HepG2 (cell line): ENCODE measurements at regions of chr7 and their contacts with region 1.

Region 1: GRCh38 chr7:43582503-43583423 is at the start of gene STK17A:
- DNase-seq: peak; percentile 88
- ATAC-seq: peak; percentile 84
- H3K4me3 ChIP-seq: peak within 1 kb of the TSS; percentile 89 to 96 (median 93)
- H3K27ac ChIP-seq: peak within 1 kb of the TSS; percentile 75
- H3K4me1 ChIP-seq: peaks cover 49% of the 10 kb centered on the region
- H3K27me3 ChIP-seq: peaks cover 0 to 5% of the 10 kb centered on the region in 2 experiments; a peak in 1 of 5 replicates
- CTCF ChIP-seq: peak; percentile 99
- EP300 ChIP-seq: 0 out of 4 replicates have a peak, but pooled peaks of 1 of the 2 experiments have one; percentile 13
- POLR2A ChIP-seq: peak; percentile 95 to 97
- RAD21 ChIP-seq: peak; percentile 95
- total RNA-seq, gene STK17A: 24.3 and 30.2 TPM in 2 replicates

Region 2: DNA sequence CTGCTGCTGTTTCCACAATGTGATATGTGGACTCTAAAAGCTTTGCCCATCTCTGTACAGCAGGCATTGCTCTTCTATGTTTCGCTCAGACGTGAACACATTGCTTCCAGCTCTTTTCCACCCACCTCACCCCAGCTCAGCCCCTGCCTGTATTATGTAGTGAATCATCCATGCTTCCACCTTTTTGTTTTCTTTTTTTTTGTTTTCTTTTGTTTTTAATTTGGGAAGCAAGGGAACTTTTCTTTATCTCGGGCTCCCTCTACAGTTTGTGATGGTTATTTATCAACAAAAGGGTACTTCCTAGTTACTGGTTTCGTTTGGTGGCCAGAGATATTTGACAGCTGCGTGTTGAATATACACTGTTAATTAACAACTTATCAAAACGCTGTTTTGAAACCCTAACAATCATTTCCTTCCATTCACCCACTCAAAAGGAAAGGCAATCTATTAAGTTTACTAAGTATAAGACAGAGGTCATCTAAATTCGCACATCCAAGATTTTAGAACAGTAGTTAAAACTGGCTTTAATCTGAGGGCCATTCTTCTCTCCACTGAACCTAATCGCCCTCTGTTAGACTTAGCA is 127.7 kb before region 1 on chr7:
- CTCF ChIA-PET with region 1: no interaction called
- POLR2A ChIA-PET with region 1: interaction called, 4 read pairs
- in situ Hi-C with region 1: no loop called
- intact Hi-C with region 1: loop called (anchors 5 kb)
- DNase-seq: peak; percentile 29
- ATAC-seq: peak; percentile 56
- H3K4me3 ChIP-seq: no peak overlapping the region
- H3K27ac ChIP-seq: no peak overlapping the region
- H3K4me1 ChIP-seq: peaks cover 27% of the 10 kb centered on the region
- H3K27me3 ChIP-seq: 0 out of 5 replicates have a peak, but pooled peaks cover 0 to 2% of the 10 kb centered on the region in 2 experiments
- CTCF ChIP-seq: peak; percentile 60
- EP300 ChIP-seq: no peak
- POLR2A ChIP-seq: no peak
- RAD21 ChIP-seq: no peak

Region 3: DNA sequence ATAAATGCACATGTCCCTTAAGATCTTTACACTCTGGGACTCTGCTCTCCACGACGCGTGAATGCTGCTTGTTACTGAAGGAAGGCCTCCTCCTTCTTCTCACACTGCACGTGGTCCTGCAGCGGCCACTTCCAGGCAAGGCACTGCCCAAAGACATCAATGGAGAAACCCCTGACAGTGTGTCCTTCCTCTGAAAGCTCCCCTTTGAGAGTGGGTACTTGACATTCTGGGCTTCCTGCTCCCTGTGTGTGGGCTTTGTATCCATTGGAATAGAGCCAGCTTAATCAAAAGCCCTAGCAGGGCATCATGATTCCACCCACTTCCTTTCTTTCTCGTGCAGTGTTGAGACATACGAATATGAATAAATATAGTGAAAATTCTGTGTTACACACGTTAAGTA is 69.5 kb before region 1 on chr7:
- CTCF ChIA-PET with region 1: no interaction called
- POLR2A ChIA-PET with region 1: interaction called, 3 read pairs
- in situ Hi-C with region 1: no loop called
- intact Hi-C with region 1: loop called (anchors 5 kb)
- DNase-seq: no peak
- ATAC-seq: no peak
- H3K4me3 ChIP-seq: no peak overlapping the region
- H3K27ac ChIP-seq: no peak overlapping the region
- H3K4me1 ChIP-seq: peaks cover 37% of the 10 kb centered on the region
- H3K27me3 ChIP-seq: no peaks in the 10 kb centered on the region
- CTCF ChIP-seq: no peak
- EP300 ChIP-seq: no peak
- POLR2A ChIP-seq: no peak
- RAD21 ChIP-seq: no peak

Region 4: DNA sequence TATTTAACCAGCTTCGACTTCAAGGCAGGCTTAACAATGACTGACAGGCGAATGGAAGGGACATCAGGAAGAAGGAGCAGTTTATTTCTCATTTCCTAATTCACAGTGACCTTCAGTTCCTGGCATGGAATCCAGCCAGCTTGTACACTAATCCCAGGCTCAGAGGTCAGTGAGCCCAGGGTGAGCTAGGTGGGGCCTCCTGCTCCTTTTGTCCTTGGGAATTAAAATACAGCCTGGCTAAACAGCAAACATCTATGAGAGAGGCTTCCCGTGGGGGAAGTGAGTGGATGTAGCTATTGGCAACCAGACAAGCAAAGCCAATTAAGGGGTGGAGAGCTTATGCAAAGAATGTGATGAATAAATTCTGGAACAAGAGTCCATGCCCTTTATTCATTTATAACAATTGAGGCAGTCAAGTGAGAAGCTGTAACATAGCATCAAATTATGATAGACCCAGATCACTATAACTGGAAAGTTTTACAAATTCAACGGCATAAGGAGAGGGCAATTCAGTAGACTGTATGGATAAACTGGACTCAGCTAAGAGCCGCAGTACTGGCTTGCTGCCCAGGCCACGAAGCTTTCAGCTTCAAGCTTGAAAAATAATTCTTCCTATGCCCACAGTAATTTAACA is 57.2 kb after region 1 on chr7:
- CTCF ChIA-PET with region 1: no interaction called
- POLR2A ChIA-PET with region 1: interaction called, 17 read pairs
- in situ Hi-C with region 1: no loop called
- intact Hi-C with region 1: loop called (anchors 5 kb)
- DNase-seq: peak; percentile 98
- ATAC-seq: peak; percentile 96
- H3K4me3 ChIP-seq: no peak overlapping the region; a peak in 1 of 6 replicates
- H3K27ac ChIP-seq: peak overlapping the region; percentile 97
- H3K4me1 ChIP-seq: peaks cover 64% of the 10 kb centered on the region
- H3K27me3 ChIP-seq: no peaks in the 10 kb centered on the region
- CTCF ChIP-seq: no peak
- EP300 ChIP-seq: peak; percentile 89 to 91
- POLR2A ChIP-seq: no peak
- RAD21 ChIP-seq: no peak

Region 5: GRCh38 chr7:43700059-43700501 is 117.3 kb after region 1 on chr7:
- CTCF ChIA-PET with region 1: interaction called, 59 read pairs
- POLR2A ChIA-PET with region 1: interaction called, 39 read pairs
- in situ Hi-C with region 1: loop called (anchors 5 kb)
- intact Hi-C with region 1: loop called (anchors 1 kb)
- DNase-seq: peak; percentile 46
- ATAC-seq: 0 out of 3 replicates have a peak, but pooled peaks have one; percentile 38
- H3K4me3 ChIP-seq: no peak overlapping the region
- H3K27ac ChIP-seq: no peak overlapping the region
- H3K4me1 ChIP-seq: peaks cover 17% of the 10 kb centered on the region
- H3K27me3 ChIP-seq: no peaks in the 10 kb centered on the region
- CTCF ChIP-seq: peak; percentile 76
- EP300 ChIP-seq: no peak
- POLR2A ChIP-seq: no peak
- RAD21 ChIP-seq: peak; percentile 78

Region 6: DNA sequence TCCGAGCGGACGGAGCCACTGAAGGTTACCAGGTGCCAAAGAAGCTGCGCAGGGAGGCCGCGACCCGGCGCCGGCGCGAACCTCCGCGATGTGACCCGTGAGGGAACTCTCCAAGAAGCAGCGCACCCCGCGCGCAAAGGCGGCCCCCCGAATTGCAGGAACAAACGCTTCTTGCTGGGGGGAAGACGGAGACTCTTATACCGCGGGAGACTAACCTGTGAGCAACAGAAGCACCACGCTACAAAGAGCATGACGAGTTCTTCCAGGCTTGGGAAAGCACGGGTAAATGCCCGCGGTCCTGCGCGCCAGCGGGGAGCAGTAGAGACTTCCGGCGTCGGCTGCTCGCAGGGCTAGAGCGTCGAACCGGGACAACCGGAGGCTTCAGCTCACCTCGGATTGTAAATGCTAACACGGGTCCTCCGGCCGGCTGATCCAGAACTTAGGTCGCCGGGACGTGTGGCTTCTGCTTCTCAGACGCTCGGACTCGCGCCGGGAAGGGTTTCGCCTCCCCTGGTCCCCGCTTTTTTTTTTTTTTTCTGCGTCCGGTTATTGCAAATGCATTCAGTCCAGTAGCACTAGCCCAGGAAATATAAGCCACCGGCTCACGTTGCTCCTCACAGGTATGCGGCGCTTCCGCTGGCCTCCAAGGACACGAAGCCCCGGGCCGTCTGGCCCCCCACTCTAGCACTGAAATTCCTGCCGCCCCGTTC is 146.6 kb after region 1 on chr7 and contains the start of gene COA1:
- CTCF ChIA-PET with region 1: no interaction called
- POLR2A ChIA-PET with region 1: interaction called, 22 read pairs
- in situ Hi-C with region 1: no loop called
- intact Hi-C with region 1: no loop called
- DNase-seq: peak; percentile 82
- ATAC-seq: peak; percentile 99
- H3K4me3 ChIP-seq: peak within 1 kb of the TSS; percentile 89 to 98 (median 95)
- H3K27ac ChIP-seq: peak within 1 kb of the TSS; percentile 89
- H3K4me1 ChIP-seq: peaks cover 28% of the 10 kb centered on the region
- H3K27me3 ChIP-seq: no peaks in the 10 kb centered on the region; a peak in 1 of 5 replicates
- CTCF ChIP-seq: no peak
- EP300 ChIP-seq: 0 out of 4 replicates have a peak, but pooled peaks of 1 of the 2 experiments have one; percentile 30
- POLR2A ChIP-seq: peak; percentile 84 to 86
- RAD21 ChIP-seq: peak; percentile 49; the same call in 1 of the 2 replicates
- total RNA-seq, gene COA1: 65.7 and 73.8 TPM in 2 replicates

Region 7: DNA sequence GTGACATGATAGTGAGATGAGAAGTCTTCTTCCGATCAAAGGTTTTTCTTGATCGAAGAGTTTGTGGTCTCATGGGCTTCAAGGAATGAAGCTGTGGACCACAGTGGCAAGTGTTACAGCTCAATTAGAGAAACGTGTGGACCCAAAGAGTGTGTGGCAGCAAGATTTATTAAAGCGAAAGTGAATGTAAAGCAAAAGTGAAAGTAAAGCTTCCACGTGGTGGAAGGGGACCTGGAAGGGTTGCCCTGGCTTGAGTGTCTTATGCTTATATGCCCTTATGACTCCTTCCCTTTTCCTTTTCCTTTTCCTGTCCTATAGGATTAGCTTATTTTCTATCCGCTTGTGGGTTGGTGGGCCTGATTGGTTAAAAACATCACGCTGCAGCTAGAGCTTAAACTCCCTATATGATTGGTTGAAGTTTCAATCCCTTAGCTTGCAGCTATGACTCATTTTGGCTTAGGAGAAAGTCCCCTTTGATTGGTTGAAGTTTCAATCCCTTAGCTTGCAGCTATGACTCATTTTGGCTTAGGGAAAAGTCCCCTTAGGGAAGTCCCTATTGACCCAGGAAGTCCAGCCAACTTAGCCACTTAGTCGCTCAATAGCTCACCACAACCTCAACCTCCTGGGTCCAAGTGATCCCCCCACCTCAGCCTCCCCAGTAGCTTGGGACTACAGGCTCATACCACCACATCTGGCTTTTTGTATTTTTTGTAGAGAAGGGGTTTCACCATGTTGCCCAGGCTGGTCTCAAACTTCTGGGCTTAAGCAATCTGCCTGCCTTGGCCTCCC is 251.9 kb after region 1 on chr7:
- CTCF ChIA-PET with region 1: interaction called, 46 read pairs
- POLR2A ChIA-PET with region 1: interaction called, 6 read pairs
- in situ Hi-C with region 1: loop called (anchors 5 kb)
- intact Hi-C with region 1: loop called (anchors 1 kb)
- DNase-seq: no peak
- ATAC-seq: no peak
- H3K4me3 ChIP-seq: peak overlapping the region in 2 of 3 experiments; percentile 8 to 40; a peak in 4 of 6 replicates
- H3K27ac ChIP-seq: no peak overlapping the region
- H3K4me1 ChIP-seq: peaks cover 23% of the 10 kb centered on the region
- H3K27me3 ChIP-seq: no peaks in the 10 kb centered on the region
- CTCF ChIP-seq: no peak
- EP300 ChIP-seq: no peak
- POLR2A ChIP-seq: no peak
- RAD21 ChIP-seq: no peak

Region 8: GRCh38 chr7:44438816-44439215 is 856.1 kb after region 1 on chr7:
- CTCF ChIA-PET with region 1: no interaction called
- POLR2A ChIA-PET with region 1: no interaction called
- in situ Hi-C with region 1: no loop called
- intact Hi-C with region 1: no loop called
- DNase-seq: no peak
- ATAC-seq: no peak
- H3K4me3 ChIP-seq: no peak overlapping the region
- H3K27ac ChIP-seq: no peak overlapping the region
- H3K4me1 ChIP-seq: no peaks in the 10 kb centered on the region
- H3K27me3 ChIP-seq: no peaks in the 10 kb centered on the region
- CTCF ChIP-seq: no peak
- EP300 ChIP-seq: no peak
- POLR2A ChIP-seq: no peak
- RAD21 ChIP-seq: no peak